PC-9 (cell line): ENCODE measurements at regions of chrX and their contacts with region 1.

Region 1: DNA sequence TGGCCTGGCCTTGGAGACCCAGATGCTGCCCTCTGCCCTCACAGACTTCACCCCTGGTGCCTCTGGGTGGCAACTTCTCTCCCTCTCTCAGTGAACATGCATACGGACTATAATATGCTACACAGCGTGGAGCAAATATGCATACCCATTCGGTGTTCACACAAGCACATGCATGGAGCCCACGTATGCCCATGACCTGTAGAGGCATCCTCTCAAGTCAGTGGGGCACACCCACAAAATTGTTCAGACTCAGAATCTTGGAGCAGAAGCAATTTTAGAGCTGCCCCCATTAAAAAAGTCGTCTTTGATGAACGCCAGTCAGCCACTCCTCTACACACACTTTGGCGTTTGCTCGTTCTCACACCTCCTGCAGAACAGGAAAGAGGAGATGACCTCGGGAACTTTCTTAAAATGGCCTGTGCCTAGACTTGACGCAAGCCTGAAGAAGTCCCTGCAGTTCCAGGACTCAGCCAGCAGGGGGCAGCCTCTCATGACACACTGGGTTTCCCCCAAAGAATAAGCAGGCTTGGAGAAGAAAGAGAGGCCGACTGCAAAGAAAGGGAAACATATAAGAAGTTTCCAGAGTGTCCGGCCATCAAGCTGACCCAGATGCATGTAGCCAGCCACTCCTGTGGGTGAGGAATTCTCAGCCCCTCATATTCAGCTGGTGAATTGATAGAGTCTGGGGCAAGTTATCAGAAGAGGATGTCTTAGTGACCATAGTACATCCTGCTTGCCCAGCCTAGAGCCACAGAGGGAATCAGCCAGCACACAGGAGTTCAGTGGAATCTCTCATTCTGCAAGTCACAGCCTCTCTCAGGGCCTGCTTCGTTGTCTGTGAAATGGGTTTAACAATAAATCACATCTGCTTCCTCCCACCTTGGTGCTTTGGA is 17.3 kb downstream of the APLN start:
- DNase-seq: peak; percentile 41 to 66
- H3K4me3 ChIP-seq: no peak overlapping the region
- H3K27ac ChIP-seq: no peak overlapping the region
- H3K4me1 ChIP-seq: no peaks in the 10 kb centered on the region
- H3K27me3 ChIP-seq: no peaks in the 10 kb centered on the region
- CTCF ChIP-seq: peak; percentile 99

Region 2: DNA sequence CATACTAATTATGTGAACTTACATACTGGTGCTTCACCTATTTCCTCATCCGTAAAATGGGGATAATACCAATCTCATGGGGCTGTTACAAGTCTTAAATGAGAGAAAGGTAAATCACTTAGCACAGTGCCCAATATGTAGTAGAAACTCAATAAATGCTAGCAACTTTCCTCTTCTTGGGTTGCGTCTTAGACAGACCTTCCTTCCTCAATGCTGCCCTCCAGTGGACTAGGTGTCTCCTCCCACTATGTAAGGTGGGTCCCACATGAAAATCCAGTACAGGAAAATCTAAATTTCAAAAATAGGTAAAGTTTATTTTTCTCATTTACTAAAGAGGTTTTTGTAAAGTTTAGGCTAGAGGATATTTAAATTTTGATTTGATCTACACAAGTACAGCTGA is 185.7 kb after region 1 on chrX:
- CTCF ChIA-PET with region 1: no interaction called
- POLR2A ChIA-PET with region 1: no interaction called
- intact Hi-C with region 1: loop called (anchors 10 kb)
- DNase-seq: peak in 1 of 2 experiments; percentile 18
- H3K4me3 ChIP-seq: no peak overlapping the region
- H3K27ac ChIP-seq: no peak overlapping the region
- H3K4me1 ChIP-seq: no peaks in the 10 kb centered on the region
- H3K27me3 ChIP-seq: no peaks in the 10 kb centered on the region
- CTCF ChIP-seq: peak; percentile 68